Lower leg skin (tissue), 4 donors: ENCODE measurements at regions of chr12 and their contacts with region 1.

Region 1: GRCh38 chr12:64551698-64552097 is 58.6 kb upstream of the RASSF3 start:
- DNase-seq: peak in 1 of 2 donors; percentile 54
- H3K4me3 ChIP-seq: no peak overlapping the region
- CTCF ChIP-seq: no peak
- POLR2A ChIP-seq: no peak

Region 2: DNA sequence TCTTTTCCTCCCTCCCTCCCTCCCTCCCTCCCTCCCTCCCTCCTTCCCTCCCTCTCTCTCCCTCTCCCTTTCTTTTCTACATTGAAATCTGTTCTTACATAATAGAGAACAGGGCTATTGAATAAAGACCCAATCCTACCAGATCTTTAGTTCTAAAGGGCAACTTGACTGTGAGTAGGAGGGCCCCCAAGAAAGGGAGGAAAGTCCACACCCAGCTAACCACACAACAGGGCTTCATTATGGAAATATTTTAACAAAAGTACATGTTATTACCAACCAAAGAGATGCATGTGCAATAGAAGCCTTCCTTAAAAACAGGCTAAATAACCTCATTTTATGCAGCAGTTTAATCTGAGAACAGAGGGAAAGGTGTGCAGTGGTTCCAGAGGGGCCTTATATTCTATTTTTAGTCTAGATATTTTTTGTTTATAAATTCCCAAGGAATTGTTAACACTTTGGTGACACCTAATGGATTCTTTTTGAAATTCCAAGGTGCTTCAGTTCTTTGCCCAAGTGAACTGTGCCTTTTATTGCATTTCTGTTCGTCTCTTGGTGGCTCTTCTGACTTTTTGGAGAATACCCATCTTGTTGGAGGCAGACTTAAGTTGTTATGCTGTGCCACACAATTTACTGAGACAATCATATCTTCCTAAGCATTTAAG is 144.5 kb after region 1 on chr12:
- intact Hi-C with region 1: loop called (anchors 2 kb)
- DNase-seq: no peak
- H3K4me3 ChIP-seq: no peak overlapping the region
- CTCF ChIP-seq: no peak
- POLR2A ChIP-seq: no peak